Activated CD4-positive, alpha-beta T cell treated with anti-CD3 and anti-CD28 coated beads for 36 hours (primary cell): ENCODE measurements at regions of chr10 and their contacts with region 1.

Region 1: GRCh38 chr10:119305860-119306513 is 98.6 kb downstream of the GRK5 start:
- DNase-seq: peak; percentile 93
- ATAC-seq: peak; percentile 73
- H3K4me3 Mint-ChIP-seq: peak overlapping the region; percentile 72
- H3K27ac Mint-ChIP-seq: peak overlapping the region; percentile 100
- H3K4me1 Mint-ChIP-seq: peaks cover 79% of the 10 kb centered on the region
- H3K27me3 Mint-ChIP-seq: peaks cover 2% of the 10 kb centered on the region

Region 2: GRCh38 chr10:117653170-117653515 is 1652.8 kb before region 1 on chr10:
- CTCF ChIA-PET with region 1: no interaction called
- POLR2A ChIA-PET with region 1: no interaction called
- intact Hi-C with region 1: loop called in 1 of 2 experiments (anchors 10 kb)
- DNase-seq: peak; percentile 61
- ATAC-seq: peak; percentile 95
- H3K4me3 Mint-ChIP-seq: no peak overlapping the region
- H3K27ac Mint-ChIP-seq: no peak overlapping the region
- H3K4me1 Mint-ChIP-seq: peaks cover 27% of the 10 kb centered on the region
- H3K27me3 Mint-ChIP-seq: peaks cover 34% of the 10 kb centered on the region

Region 3: DNA sequence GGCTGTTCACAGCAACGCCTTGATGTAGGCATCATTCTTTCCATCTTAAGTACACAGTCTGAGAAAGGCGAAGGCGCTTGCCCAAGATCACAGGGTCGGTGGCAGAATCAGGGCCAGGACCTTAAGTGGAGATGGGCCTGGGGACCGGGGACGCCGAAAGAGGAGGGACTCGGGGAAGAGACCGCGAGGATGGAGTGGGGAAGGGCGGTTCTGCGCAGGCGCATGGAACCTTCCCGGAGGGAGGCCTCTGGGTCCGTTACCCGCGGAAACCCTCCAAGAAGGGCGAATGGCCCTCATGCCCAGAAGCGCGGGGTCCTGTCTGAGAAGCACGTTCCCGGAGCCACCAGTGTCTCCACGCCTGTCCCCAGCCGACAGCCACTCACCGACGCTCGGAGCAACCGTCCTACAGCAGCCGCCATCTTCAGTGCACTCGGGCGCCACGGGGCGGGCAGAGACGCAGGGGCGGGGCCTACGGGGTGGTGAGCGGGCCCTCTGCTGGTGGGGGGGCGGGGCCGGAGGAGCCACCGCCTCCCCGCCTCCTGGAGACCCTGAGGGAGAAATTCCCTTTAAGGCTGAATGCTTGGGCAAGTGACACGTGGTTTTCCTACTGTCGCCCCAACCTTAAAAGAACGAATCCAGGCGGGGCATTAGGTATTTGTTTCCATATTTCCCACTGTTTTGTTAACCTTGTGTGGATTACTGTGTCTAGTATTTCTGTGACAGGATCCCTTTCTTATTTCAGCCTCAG is 127.4 kb before region 1 on chr10 and contains the start of gene PRDX3:
- CTCF ChIA-PET with region 1: no interaction called
- POLR2A ChIA-PET with region 1: interaction called, 3 read pairs
- intact Hi-C with region 1: loop called in 1 of 2 experiments (anchors 1 kb)
- DNase-seq: peak; percentile 98
- ATAC-seq: peak; percentile 95
- H3K4me3 Mint-ChIP-seq: peak within 1 kb of the TSS; percentile 88
- H3K27ac Mint-ChIP-seq: peak within 1 kb of the TSS; percentile 95
- H3K4me1 Mint-ChIP-seq: peaks cover 36% of the 10 kb centered on the region
- H3K27me3 Mint-ChIP-seq: no peaks in the 10 kb centered on the region
- total RNA-seq, gene PRDX3: 160 to 217 TPM

Region 4: DNA sequence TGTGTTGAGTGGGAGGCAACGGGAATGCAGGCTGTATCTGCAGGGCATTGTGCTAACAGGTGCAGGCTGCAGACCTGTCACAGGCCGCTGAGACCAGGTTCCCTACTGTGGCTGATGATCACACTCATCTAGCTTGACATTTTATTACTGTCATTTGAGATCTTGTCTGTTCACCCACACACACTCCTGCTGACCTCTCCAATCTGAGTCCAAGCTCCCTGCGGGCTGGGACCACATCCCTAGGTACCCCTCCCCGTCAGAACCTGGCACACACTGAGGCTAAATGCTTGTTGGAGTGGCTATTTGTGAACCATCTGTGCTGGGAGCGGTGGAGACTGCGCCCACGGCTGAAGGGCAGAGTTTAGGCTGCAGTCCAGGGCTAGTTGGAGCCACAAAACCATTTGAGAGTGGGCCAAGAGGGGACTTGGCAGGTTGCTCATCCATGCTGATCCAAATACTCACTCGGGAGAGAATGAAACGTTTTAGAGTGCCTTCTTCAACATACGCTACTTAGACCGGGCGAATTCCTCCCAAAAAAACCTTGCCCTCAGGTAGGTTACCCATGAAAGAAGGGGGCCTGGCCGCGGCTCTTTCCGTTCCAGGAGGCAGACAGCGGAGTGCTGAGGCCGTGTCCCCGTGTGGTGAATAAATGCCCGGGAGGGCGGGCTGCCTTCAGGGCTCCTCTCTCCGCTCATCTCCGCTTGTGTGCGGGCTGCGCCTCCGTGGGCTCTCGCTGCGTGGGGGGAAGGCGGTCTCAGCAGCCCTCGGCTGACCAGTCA is 72.2 kb after region 1 on chr10:
- CTCF ChIA-PET with region 1: no interaction called
- POLR2A ChIA-PET with region 1: no interaction called
- intact Hi-C with region 1: no loop called
- DNase-seq: no peak
- ATAC-seq: no peak
- H3K4me3 Mint-ChIP-seq: no peak overlapping the region
- H3K27ac Mint-ChIP-seq: no peak overlapping the region
- H3K4me1 Mint-ChIP-seq: peaks cover 12% of the 10 kb centered on the region
- H3K27me3 Mint-ChIP-seq: no peaks in the 10 kb centered on the region

Region 5: GRCh38 chr10:119416855-119417254 is 110.9 kb after region 1 on chr10:
- CTCF ChIA-PET with region 1: interaction called, 3 read pairs
- POLR2A ChIA-PET with region 1: no interaction called
- intact Hi-C with region 1: loop called in 1 of 2 experiments (anchors 5 kb)
- DNase-seq: peak; percentile 86
- ATAC-seq: peak; percentile 93
- H3K4me3 Mint-ChIP-seq: no peak overlapping the region
- H3K27ac Mint-ChIP-seq: no peak overlapping the region
- H3K4me1 Mint-ChIP-seq: no peaks in the 10 kb centered on the region
- H3K27me3 Mint-ChIP-seq: no peaks in the 10 kb centered on the region

Region 6: GRCh38 chr10:119542988-119543813 is 237.2 kb after region 1 on chr10:
- CTCF ChIA-PET with region 1: no interaction called
- POLR2A ChIA-PET with region 1: no interaction called
- intact Hi-C with region 1: loop called (anchors 2 to 5 kb)
- DNase-seq: peak; percentile 80
- ATAC-seq: peak; percentile 34
- H3K4me3 Mint-ChIP-seq: peak overlapping the region; percentile 77
- H3K27ac Mint-ChIP-seq: peak overlapping the region; percentile 89
- H3K4me1 Mint-ChIP-seq: peaks cover 31% of the 10 kb centered on the region
- H3K27me3 Mint-ChIP-seq: no peaks in the 10 kb centered on the region

Region 7: DNA sequence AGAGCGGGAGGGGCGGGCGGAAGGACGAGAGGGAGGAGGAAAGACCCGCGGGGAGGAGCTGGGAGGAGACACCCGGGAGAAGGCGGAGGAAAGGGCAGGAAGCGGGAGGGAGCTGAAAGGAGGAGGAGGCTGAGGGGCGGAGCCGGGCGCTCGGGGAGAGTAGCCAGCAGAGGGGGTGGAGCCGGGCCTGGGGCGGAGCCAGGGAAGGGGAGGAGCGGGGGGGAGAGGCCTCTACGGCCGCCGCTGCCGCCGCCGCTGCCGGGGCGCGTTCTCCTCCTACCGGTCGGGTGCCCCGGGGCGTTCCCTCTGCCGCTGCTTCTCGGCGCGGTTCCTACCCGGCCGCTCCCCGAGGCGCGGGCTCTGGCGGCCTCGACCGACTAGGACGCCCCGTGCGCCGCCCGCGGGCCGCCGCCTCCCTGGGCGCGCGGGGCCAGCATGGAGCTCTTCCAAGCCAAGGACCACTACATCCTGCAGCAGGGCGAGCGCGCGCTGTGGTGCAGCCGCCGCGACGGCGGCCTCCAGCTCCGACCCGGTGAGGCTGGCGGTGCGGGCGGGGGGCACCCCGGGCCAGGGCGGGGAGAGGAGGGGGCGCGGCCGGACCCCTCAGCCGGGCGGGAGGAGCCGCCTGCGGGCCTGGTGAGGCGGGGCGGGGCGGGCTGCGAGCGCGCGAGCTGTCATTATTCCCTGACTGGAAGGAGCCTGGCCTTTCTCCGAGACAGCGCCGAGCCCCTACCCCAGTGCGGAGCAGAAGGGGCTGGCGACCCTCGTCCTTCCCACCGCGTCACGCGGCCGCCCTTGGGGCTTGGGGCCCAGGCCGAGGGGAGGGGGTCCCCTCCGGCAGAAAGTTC is 420.1 kb after region 1 on chr10 and contains the start of gene INPP5F:
- CTCF ChIA-PET with region 1: no interaction called
- POLR2A ChIA-PET with region 1: no interaction called
- intact Hi-C with region 1: loop called in 1 of 2 experiments (anchors 5 kb)
- DNase-seq: peak; percentile 100
- ATAC-seq: peak; percentile 95
- H3K4me3 Mint-ChIP-seq: peak within 1 kb of the TSS; percentile 86
- H3K27ac Mint-ChIP-seq: peak within 1 kb of the TSS; percentile 73
- H3K4me1 Mint-ChIP-seq: peaks cover 47% of the 10 kb centered on the region
- H3K27me3 Mint-ChIP-seq: no peaks in the 10 kb centered on the region
- total RNA-seq, gene INPP5F: 10.9 to 12.6 TPM